Activated CD8-positive, alpha-beta T cell treated with anti-CD3 and anti-CD28 coated beads for 36 hours (primary cell): ENCODE measurements at regions of chr19 and their contacts with region 1.

Region 1: GRCh38 chr19:13861732-13862531 is 15.0 kb upstream of the NANOS3 start:
- DNase-seq: peak; percentile 92
- ATAC-seq: peak; percentile 87
- H3K4me3 Mint-ChIP-seq: peak overlapping the region; percentile 90
- H3K27ac Mint-ChIP-seq: peak overlapping the region; percentile 99
- H3K4me1 Mint-ChIP-seq: peaks cover 40% of the 10 kb centered on the region
- H3K27me3 Mint-ChIP-seq: peaks cover 21% of the 10 kb centered on the region
- CTCF ChIP-seq: peak; percentile 99

Region 2: GRCh38 chr19:13597640-13598039 is 264.3 kb before region 1 on chr19:
- CTCF ChIA-PET with region 1: interaction called, 6 read pairs
- POLR2A ChIA-PET with region 1: no interaction called
- intact Hi-C with region 1: loop called (anchors 10 kb)
- DNase-seq: peak; percentile 63
- ATAC-seq: peak; percentile 87
- H3K4me3 Mint-ChIP-seq: no peak overlapping the region
- H3K27ac Mint-ChIP-seq: no peak overlapping the region
- H3K4me1 Mint-ChIP-seq: no peaks in the 10 kb centered on the region
- H3K27me3 Mint-ChIP-seq: peaks cover 6% of the 10 kb centered on the region
- CTCF ChIP-seq: peak; percentile 58

Region 3: GRCh38 chr19:13774217-13775191 is 87.4 kb before region 1 on chr19 and contains the start of gene C19orf53:
- CTCF ChIA-PET with region 1: interaction called, 31 read pairs
- POLR2A ChIA-PET with region 1: interaction called, 10 read pairs
- intact Hi-C with region 1: no loop called
- DNase-seq: peak; percentile 94
- ATAC-seq: peak; percentile 100
- H3K4me3 Mint-ChIP-seq: peak within 1 kb of the TSS; percentile 98
- H3K27ac Mint-ChIP-seq: peak within 1 kb of the TSS; percentile 97
- H3K4me1 Mint-ChIP-seq: peaks cover 17% of the 10 kb centered on the region
- H3K27me3 Mint-ChIP-seq: no peaks in the 10 kb centered on the region
- CTCF ChIP-seq: no peak
- total RNA-seq, gene C19orf53: 120 to 128 TPM

Region 4: DNA sequence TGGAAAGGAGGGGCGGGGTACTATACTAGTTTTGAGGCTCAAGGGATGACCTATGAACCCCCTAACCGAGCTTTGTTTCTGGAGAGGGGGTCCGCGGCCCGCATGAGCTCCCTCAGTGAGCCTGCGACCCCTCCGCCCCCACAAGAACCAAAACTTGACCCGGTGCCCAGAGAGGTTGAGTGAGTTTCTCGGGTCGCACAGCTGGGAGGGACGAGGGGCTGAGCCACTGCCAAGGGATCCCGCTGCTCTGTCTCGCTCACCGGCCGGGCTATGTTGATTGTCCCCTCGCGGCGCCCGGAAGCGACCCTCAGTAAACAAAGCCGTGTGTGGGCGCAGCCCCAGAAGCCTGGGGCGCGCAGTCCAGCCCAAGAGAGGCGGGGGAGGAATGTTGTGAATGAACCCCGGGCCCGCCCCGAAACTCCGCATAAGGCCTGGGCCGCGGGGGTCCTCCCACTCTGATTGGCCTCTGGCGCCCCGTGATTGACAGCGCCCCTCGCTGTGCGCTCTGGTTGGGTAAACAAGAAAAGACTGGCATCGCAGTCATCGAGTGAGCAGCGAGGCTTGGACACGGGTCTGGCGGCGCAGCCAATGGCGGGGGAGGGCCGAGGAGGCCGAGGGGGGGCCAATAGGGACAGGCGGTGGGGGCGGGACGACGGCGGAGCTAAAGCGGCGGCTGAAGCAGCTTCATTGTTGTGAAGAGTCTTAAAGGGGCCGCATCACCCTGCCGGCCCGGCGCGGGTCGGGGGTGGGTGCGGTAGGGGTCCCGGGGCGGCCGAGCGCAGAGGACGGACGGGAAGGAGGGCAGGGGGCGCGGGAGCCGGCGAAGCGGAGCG is 67.0 kb before region 1 on chr19 and contains the start of gene ZSWIM4:
- CTCF ChIA-PET with region 1: interaction called, 58 read pairs
- POLR2A ChIA-PET with region 1: interaction called, 4 read pairs
- intact Hi-C with region 1: no loop called
- DNase-seq: peak; percentile 98
- ATAC-seq: peak; percentile 97
- H3K4me3 Mint-ChIP-seq: peak within 1 kb of the TSS; percentile 96
- H3K27ac Mint-ChIP-seq: peak within 1 kb of the TSS; percentile 94
- H3K4me1 Mint-ChIP-seq: peaks cover 29% of the 10 kb centered on the region
- H3K27me3 Mint-ChIP-seq: no peaks in the 10 kb centered on the region
- CTCF ChIP-seq: no peak
- total RNA-seq, gene ZSWIM4: 6.6 to 6.8 TPM

Region 5: GRCh38 chr19:13839130-13839937 is 22.6 kb before region 1 on chr19:
- CTCF ChIA-PET with region 1: interaction called, 56 read pairs
- POLR2A ChIA-PET with region 1: interaction called, 41 read pairs
- intact Hi-C with region 1: no loop called
- DNase-seq: peak; percentile 97
- ATAC-seq: peak; percentile 61
- H3K4me3 Mint-ChIP-seq: peak overlapping the region; percentile 97
- H3K27ac Mint-ChIP-seq: peak overlapping the region; percentile 99
- H3K4me1 Mint-ChIP-seq: peaks cover 36% of the 10 kb centered on the region
- H3K27me3 Mint-ChIP-seq: no peaks in the 10 kb centered on the region
- CTCF ChIP-seq: no peak

Region 6: GRCh38 chr19:13978347-13978733 is 116.4 kb after region 1 on chr19:
- CTCF ChIA-PET with region 1: no interaction called
- POLR2A ChIA-PET with region 1: no interaction called
- intact Hi-C with region 1: no loop called
- DNase-seq: peak; percentile 70
- ATAC-seq: peak; percentile 73
- H3K4me3 Mint-ChIP-seq: no peak overlapping the region
- H3K27ac Mint-ChIP-seq: peak overlapping the region; percentile 49
- H3K4me1 Mint-ChIP-seq: peaks cover 20% of the 10 kb centered on the region
- H3K27me3 Mint-ChIP-seq: no peaks in the 10 kb centered on the region
- CTCF ChIP-seq: no peak